B cell (primary cell): ENCODE measurements at regions of chr19 and their contacts with region 1.

Region 1: GRCh38 chr19:5904352-5905113 is at the start of gene VMAC:
- DNase-seq: peak; percentile 100
- ATAC-seq: peak; percentile 77
- H3K4me3 ChIP-seq: peak within 1 kb of the TSS; percentile 86 to 99 (median 98)
- H3K4me3 Mint-ChIP-seq: peak within 1 kb of the TSS; percentile 92
- H3K27ac ChIP-seq: peak within 1 kb of the TSS; percentile 79 to 85
- H3K27ac Mint-ChIP-seq: peak within 1 kb of the TSS; percentile 96
- H3K4me1 ChIP-seq: peaks cover 11 to 25% of the 10 kb centered on the region in 2 donors
- H3K4me1 Mint-ChIP-seq: peaks cover 38% of the 10 kb centered on the region
- H3K27me3 ChIP-seq: no peaks in the 10 kb centered on the region
- H3K27me3 Mint-ChIP-seq: no peaks in the 10 kb centered on the region
- CTCF ChIP-seq: no peak
- total RNA-seq, gene VMAC: 27.1 and 27.8 TPM in 2 replicates

Region 2: DNA sequence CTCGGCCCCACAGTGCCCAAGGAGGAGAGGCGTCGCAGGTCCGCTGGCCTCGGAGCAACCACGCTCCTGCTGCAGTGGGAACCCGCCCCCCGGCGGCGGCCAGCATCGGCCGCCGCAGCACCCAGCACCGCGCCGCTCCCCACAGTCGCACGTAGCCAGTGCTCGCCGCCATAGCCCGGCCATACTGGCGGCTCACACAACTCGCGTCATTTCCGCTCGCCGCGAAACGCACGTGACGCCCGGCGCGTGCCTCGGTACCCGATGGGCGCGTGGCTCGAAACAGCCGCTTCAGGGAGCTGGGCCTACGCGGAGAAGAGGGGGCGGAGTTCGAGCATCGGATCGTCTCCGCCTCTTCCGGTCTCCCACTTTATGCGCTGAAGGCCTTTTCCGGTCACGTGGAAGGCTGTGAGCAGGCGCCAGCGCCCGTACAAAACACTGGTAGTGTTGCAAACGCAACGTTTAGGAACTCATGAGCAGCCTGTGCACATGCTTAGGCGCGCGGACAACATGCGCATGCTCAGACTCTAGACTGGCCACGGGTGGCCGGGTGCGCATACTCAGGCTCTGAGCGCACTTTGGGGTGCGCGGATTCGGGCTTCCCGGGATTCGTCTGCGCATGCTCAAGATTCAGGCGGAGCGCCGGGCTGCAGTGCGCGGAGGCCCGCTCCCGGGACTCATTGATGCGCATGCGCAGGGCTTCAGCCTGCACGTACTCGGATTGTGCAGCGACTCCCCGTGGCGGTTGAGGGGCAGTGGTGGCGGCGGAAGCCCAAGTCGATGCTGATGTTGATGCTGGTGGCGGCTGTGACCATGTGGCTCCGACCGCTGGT is 184.4 kb before region 1 on chr19 and contains the starts of genes CATSPERD and LONP1:
- CTCF ChIA-PET with region 1: no interaction called
- POLR2A ChIA-PET with region 1: no interaction called
- intact Hi-C with region 1: loop called (anchors 1 kb)
- DNase-seq: peak; percentile 100
- ATAC-seq: peak; percentile 86
- H3K4me3 ChIP-seq: peak within 1 kb of the TSS; percentile 73 to 95 (median 91)
- H3K4me3 Mint-ChIP-seq: peak within 1 kb of the TSS; percentile 95
- H3K27ac ChIP-seq: peak within 1 kb of the TSS; percentile 87 to 98
- H3K27ac Mint-ChIP-seq: peak within 1 kb of the TSS; percentile 99
- H3K4me1 ChIP-seq: peaks cover 12 to 26% of the 10 kb centered on the region in 2 donors
- H3K4me1 Mint-ChIP-seq: peaks cover 27% of the 10 kb centered on the region
- H3K27me3 ChIP-seq: no peaks in the 10 kb centered on the region
- H3K27me3 Mint-ChIP-seq: peaks cover 3% of the 10 kb centered on the region
- CTCF ChIP-seq: peak; percentile 86
- total RNA-seq, gene CATSPERD: not detected in 2 replicates
- total RNA-seq, gene LONP1: 67.2 and 70.3 TPM in 2 replicates

Region 3: DNA sequence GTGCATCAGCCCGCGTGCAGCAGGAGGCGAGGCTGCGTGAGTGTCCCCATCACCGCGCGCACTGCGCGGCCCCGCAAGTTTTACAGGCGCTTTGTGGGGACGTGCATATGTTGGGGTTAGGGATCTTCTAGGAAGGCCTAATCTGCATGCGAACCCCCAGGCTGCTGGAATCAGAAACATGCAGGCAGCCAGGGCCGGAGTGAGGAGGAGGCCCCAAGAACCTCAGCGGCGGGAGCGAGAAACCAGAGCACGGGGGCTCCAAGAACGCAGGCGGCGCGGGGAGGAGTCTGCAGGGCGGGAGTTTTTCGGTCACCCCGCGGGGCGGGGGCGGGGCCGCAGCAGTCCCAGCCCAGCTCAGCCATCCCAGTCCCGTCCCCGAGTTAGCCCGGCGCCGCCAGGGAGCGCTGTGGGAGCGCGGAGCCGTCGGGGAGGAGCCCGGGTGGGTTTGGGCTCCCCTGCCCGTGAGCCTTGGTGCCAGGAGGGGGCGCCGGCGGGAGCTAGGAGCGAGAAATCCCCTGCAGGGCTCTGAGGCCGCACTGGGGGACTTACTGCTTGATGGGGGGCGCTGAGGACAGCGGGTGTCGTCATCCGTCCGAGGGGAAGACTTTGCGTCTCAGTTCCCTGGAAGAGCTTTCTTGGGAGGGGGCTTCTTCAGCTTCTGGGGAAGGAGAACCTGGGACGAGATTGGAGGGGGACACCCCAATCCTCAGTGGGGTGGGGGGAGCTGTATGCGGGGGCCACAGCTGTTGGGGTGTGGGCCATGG is 100.6 kb before region 1 on chr19:
- CTCF ChIA-PET with region 1: interaction called, 10 read pairs
- POLR2A ChIA-PET with region 1: no interaction called
- intact Hi-C with region 1: loop called (anchors 5 kb)
- DNase-seq: peak; percentile 92
- ATAC-seq: peak; percentile 91
- H3K4me3 ChIP-seq: peak overlapping the region in 4 of 5 experiments; percentile 7 to 55 (median 42)
- H3K4me3 Mint-ChIP-seq: peak overlapping the region; percentile 76
- H3K27ac ChIP-seq: peak overlapping the region in 1 of 2 donors; percentile 53
- H3K27ac Mint-ChIP-seq: peak overlapping the region; percentile 50
- H3K4me1 ChIP-seq: peaks cover 20 to 27% of the 10 kb centered on the region in 2 donors
- H3K4me1 Mint-ChIP-seq: peaks cover 22% of the 10 kb centered on the region
- H3K27me3 ChIP-seq: peaks cover 0 to 66% (median 29%) of the 10 kb centered on the region in 4 experiments
- H3K27me3 Mint-ChIP-seq: peaks cover 26% of the 10 kb centered on the region
- CTCF ChIP-seq: peak; percentile 85

Region 4: GRCh38 chr19:5977785-5978605 is 73.5 kb after region 1 on chr19 and contains the start of gene RANBP3:
- CTCF ChIA-PET with region 1: no interaction called
- POLR2A ChIA-PET with region 1: interaction called, 8 read pairs
- intact Hi-C with region 1: loop called (anchors 1 kb)
- DNase-seq: peak; percentile 99
- ATAC-seq: peak; percentile 91
- H3K4me3 ChIP-seq: peak within 1 kb of the TSS; percentile 59 to 93 (median 91)
- H3K4me3 Mint-ChIP-seq: peak within 1 kb of the TSS; percentile 97
- H3K27ac ChIP-seq: peak within 1 kb of the TSS; percentile 59 to 91
- H3K27ac Mint-ChIP-seq: peak within 1 kb of the TSS; percentile 99
- H3K4me1 ChIP-seq: peaks cover 38 to 47% of the 10 kb centered on the region in 2 donors
- H3K4me1 Mint-ChIP-seq: peaks cover 47% of the 10 kb centered on the region
- H3K27me3 ChIP-seq: no peaks in the 10 kb centered on the region
- H3K27me3 Mint-ChIP-seq: no peaks in the 10 kb centered on the region
- CTCF ChIP-seq: no peak
- total RNA-seq, gene RANBP3: 90.0 and 91.7 TPM in 2 replicates